Heart right ventricle (tissue), 16 donors: ENCODE measurements at regions of chr17 and their contacts with region 1.

Region 1: DNA sequence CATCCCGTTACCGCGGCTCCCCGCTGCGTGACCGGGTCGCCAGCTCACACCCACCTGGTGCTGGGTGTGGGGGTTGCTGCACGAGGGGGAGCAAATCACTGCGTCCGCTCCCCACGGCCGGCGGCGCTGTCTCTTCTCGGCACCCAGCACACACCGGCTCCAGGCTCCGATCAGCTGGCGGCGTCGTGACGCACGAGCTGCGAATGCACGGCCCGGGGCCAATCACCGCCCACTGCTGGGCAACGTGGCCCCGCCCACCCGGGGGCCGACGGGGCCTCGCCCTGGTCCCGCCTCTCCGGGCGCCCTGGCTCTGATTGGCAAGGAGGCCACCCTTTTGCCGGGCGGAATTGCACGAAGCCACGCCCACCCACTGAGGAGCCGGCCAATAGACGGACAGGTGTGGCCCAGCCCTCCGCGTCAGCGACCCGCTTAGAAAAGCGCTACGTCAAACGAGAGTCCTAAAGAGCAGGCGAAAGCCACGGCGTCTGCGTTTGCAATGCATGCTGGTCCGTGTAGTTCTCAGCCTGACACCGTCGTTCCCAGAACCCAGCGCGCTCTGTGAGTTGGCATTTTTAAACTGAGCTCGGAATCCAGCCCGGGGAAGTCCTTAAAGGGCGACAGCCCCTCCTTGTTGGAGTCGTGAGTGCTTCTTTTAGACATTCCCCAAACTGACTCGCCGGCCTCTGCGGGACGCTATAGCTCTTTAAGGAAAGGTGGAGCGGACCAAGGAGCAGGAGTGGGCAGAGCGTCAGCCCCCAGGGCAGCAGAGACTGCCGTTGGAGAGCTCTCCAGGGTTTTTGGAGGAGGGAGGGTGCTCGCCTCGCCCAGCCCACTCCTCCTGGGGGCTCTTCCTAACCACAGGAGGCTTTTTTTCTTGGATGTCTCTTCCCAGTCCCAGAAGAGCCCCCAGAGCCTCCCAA is 6.2 kb upstream of the TLCD2 start:
- DNase-seq: peak; percentile 100
- ATAC-seq: peak; percentile 73 to 86 (median 83)
- H3K4me3 ChIP-seq: peak overlapping the region; percentile 81 to 99 (median 94)
- H3K27ac ChIP-seq: peak overlapping the region; percentile 98 to 100 (median 99)
- H3K4me1 ChIP-seq: peaks cover 17 to 68% (median 51%) of the 10 kb centered on the region in 9 donors
- H3K27me3 ChIP-seq: no peaks in the 10 kb centered on the region
- CTCF ChIP-seq: peak in 3 of 9 donors; percentile 7 to 34 (median 14)

Region 2: GRCh38 chr17:1267471-1267947 is 448.8 kb before region 1 on chr17:
- intact Hi-C with region 1: loop called in 1 of 10 experiments (anchors 10 kb)
- DNase-seq: peak in 1 of 2 donors; percentile 34
- ATAC-seq: peak in 7 of 8 donors; percentile 10 to 64 (median 38)
- H3K4me3 ChIP-seq: peak overlapping the region; percentile 54 to 81 (median 72)
- H3K27ac ChIP-seq: peak overlapping the region; percentile 76 to 96 (median 94)
- H3K4me1 ChIP-seq: peaks cover 0 to 26% (median 12%) of the 10 kb centered on the region in 9 donors
- H3K27me3 ChIP-seq: peaks cover 11 to 41% (median 30%) of the 10 kb centered on the region in 7 donors
- CTCF ChIP-seq: no peak

Region 3: DNA sequence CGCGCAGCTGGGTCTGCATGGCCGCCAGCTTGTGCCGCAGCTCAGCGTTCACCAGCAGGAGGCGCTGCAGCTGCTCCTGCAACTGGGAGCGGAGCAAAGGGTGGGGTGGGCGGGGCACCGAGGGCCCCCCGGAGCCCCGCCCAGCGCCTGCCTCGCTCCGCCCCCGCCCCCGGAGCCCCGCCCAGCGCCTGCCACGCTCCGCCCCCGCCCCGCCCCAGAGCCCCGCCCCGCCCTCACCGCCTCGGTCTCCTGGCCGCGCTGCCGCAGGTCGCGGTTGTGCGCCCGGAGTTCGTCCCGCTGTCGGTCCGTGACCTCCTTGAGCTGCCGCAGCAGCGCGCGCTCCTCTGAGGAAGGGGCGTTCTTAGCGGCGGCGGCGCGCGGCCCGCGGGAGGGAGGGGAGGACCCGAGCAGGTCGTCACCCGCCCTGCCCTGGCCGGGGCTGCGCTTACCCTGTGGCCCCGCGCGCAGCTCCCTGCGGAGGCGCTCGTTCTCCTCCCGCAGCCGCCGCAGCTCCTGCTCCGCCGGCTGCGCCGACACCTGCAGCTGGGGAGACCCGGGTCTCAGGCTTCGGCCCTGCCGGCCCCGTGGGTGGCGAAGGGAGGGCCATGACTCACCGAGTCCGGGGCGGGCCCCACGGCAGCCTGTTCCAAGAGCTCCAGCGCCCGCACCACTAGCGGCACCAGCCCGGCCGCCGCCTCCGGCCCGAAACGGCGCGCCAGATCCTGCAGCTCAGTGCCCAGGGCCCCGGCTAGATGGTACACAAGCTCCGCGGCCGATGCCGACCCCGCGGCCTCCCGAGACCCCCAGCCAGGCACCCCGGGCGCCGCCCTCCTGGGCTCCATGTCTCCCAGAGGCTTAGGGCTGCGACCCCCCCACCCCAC is 67.1 kb before region 1 on chr17:
- intact Hi-C with region 1: loop called in 2 of 10 experiments (anchors 2 to 5 kb)
- DNase-seq: peak; percentile 93 to 97
- ATAC-seq: peak; percentile 34 to 77 (median 62)
- H3K4me3 ChIP-seq: peak overlapping the region; percentile 56 to 94 (median 81)
- H3K27ac ChIP-seq: peak overlapping the region; percentile 97 to 100 (median 99)
- H3K4me1 ChIP-seq: peaks cover 34 to 61% (median 55%) of the 10 kb centered on the region in 9 donors
- H3K27me3 ChIP-seq: no peaks in the 10 kb centered on the region
- CTCF ChIP-seq: peak; percentile 75 to 95 (median 88)

Region 4: DNA sequence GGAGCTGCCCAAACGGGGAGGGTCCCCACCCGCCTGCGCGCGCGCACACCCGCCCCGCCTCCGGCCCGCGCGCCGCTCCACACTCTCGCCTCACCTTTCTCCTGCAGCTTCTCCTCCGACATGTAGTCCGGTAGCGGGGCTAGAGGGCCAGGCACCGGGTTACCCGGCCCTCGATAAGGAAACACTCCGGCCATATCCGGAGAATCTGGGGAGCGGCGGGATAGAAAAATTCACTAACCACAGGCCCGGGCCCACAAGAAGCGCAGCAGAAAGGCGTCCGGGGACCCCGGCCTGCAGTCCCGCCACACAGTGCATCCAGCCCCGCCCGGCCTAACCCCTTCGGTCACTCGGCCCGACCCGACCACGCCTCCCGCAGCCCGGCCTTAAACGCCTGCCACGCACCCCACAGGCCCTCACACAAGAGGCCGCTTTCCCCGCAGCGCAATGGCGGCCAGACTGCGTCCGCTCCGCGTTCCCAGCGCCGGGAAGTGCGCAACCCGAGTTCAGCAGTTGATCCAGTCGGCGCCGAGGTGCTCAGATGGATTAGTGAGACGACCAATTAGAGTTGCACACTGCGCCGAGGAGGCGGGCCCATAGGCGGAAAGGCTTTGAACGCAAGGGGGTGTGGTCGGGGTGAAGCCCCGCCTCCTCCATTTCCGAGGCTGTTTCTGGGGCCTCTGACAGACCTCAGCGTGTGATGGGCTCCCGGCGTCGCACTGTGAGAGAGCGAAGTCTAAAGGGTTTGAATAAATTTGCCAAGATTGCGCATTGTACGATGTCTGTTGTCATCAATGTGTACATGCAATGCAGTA is 31.8 kb before region 1 on chr17 and contains the start of gene PRPF8:
- intact Hi-C with region 1: loop called in 4 of 10 experiments (anchors 1 to 5 kb)
- DNase-seq: peak; percentile 98
- ATAC-seq: peak; percentile 99 to 100 (median 100)
- H3K4me3 ChIP-seq: peak within 1 kb of the TSS; percentile 48 to 98 (median 86)
- H3K27ac ChIP-seq: peak within 1 kb of the TSS; percentile 81 to 98 (median 95)
- H3K4me1 ChIP-seq: peaks cover 0 to 28% (median 24%) of the 10 kb centered on the region in 9 donors
- H3K27me3 ChIP-seq: no peaks in the 10 kb centered on the region
- CTCF ChIP-seq: peak in 1 of 9 donors; percentile 3
- total RNA-seq, gene PRPF8: 137 to 205 (median 179) TPM

Region 5: DNA sequence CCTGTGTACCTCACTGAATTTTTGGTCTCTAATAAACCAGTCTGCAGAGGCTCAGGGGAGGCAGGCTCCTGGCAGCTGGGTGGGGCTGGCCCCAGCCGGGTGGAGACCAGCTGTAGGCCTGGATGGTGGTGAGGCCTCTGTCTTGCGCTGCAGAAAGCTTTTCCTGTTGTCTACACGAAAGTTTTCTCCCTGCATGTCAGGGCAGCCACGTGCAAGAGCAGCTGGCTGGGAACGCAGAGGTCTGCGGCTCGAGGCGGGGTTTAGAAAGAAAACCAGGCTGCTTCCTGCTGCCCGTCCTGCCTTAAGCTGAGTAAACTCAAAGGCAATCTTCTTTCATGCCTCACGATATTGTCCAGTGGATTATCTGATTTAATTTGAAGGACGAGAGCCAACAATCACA is 47.9 kb after region 1 on chr17:
- intact Hi-C with region 1: no loop called
- DNase-seq: peak; percentile 66 to 71
- ATAC-seq: peak; percentile 67 to 75 (median 70)
- H3K4me3 ChIP-seq: peak overlapping the region in 7 of 10 donors; percentile 38 to 60 (median 53)
- H3K27ac ChIP-seq: peak overlapping the region; percentile 43 to 90 (median 80)
- H3K4me1 ChIP-seq: peaks cover 0 to 47% (median 14%) of the 10 kb centered on the region in 9 donors
- H3K27me3 ChIP-seq: no peaks in the 10 kb centered on the region
- CTCF ChIP-seq: no peak

Region 6: GRCh38 chr17:1847191-1847590 is 130.9 kb after region 1 on chr17:
- intact Hi-C with region 1: loop called in 1 of 10 experiments (anchors 10 kb)
- DNase-seq: peak; percentile 51 to 64
- ATAC-seq: peak; percentile 81 to 99 (median 93)
- H3K4me3 ChIP-seq: no peak overlapping the region
- H3K27ac ChIP-seq: peak overlapping the region; percentile 0 to 67 (median 46)
- H3K4me1 ChIP-seq: peaks cover 0 to 26% (median 10%) of the 10 kb centered on the region in 9 donors
- H3K27me3 ChIP-seq: no peaks in the 10 kb centered on the region
- CTCF ChIP-seq: no peak